ENCODE measurements at regions of chr2 and their contacts with region 1.

Region 1: GRCh38 chr2:149313512-149313972 is 16.8 kb upstream of the LYPD6 start:
- DNase-seq: peak; percentile 76
- H3K4me3 Mint-ChIP-seq: no peak overlapping the region
- H3K27ac Mint-ChIP-seq: no peak overlapping the region
- H3K4me1 Mint-ChIP-seq: peaks cover 9% of the 10 kb centered on the region
- H3K27me3 Mint-ChIP-seq: peaks cover under 1% of the 10 kb centered on the region
- CTCF ChIP-seq: peak; percentile 53

Region 2: DNA sequence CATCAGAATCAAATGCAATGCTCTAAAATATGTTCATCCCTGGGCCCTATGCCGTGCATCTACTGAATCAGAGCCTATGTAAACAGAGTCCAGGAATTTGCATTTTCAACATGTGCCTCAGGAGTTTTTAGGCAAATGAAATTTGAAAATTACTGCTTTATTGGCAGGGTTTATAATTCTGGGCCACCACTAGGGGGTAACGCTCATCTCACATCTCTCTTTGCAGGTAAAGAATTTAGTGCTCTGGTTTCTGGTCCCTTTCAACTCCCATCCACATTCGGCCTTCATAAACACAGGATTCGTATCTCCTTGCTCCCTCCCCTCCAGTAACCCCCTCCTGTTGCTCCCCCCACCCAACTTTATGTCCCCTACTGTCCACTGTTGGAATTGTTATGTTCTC is 225.8 kb before region 1 on chr2:
- CTCF ChIA-PET with region 1: no interaction called
- POLR2A ChIA-PET with region 1: no interaction called
- intact Hi-C with region 1: loop called (anchors 10 kb)
- DNase-seq: peak; percentile 16
- H3K4me3 Mint-ChIP-seq: no peak overlapping the region
- H3K27ac Mint-ChIP-seq: no peak overlapping the region
- H3K4me1 Mint-ChIP-seq: no peaks in the 10 kb centered on the region
- H3K27me3 Mint-ChIP-seq: no peaks in the 10 kb centered on the region
- CTCF ChIP-seq: peak; percentile 36

Region 3: DNA sequence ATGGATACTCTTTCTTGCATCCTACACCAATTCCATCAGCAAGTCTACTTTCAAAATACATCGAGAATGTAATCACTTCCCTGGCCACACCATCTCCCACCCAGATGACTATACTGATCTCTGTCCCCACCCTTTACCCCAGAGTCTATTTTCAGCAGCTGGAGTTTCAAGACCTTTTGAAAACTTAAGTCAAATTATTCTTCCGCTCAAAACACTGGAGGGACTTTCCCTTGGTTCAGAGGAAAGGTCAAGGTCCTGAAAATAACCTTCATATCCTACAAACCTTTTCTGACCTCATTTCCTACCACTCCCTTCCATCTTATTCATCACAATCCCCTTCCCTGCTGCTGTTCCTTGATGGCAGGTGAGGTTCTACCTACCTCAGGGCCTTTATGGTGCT is 42.0 kb before region 1 on chr2:
- CTCF ChIA-PET with region 1: no interaction called
- POLR2A ChIA-PET with region 1: no interaction called
- intact Hi-C with region 1: no loop called
- DNase-seq: no peak
- H3K4me3 Mint-ChIP-seq: no peak overlapping the region
- H3K27ac Mint-ChIP-seq: no peak overlapping the region
- H3K4me1 Mint-ChIP-seq: no peaks in the 10 kb centered on the region
- H3K27me3 Mint-ChIP-seq: no peaks in the 10 kb centered on the region
- CTCF ChIP-seq: no peak

Region 4: DNA sequence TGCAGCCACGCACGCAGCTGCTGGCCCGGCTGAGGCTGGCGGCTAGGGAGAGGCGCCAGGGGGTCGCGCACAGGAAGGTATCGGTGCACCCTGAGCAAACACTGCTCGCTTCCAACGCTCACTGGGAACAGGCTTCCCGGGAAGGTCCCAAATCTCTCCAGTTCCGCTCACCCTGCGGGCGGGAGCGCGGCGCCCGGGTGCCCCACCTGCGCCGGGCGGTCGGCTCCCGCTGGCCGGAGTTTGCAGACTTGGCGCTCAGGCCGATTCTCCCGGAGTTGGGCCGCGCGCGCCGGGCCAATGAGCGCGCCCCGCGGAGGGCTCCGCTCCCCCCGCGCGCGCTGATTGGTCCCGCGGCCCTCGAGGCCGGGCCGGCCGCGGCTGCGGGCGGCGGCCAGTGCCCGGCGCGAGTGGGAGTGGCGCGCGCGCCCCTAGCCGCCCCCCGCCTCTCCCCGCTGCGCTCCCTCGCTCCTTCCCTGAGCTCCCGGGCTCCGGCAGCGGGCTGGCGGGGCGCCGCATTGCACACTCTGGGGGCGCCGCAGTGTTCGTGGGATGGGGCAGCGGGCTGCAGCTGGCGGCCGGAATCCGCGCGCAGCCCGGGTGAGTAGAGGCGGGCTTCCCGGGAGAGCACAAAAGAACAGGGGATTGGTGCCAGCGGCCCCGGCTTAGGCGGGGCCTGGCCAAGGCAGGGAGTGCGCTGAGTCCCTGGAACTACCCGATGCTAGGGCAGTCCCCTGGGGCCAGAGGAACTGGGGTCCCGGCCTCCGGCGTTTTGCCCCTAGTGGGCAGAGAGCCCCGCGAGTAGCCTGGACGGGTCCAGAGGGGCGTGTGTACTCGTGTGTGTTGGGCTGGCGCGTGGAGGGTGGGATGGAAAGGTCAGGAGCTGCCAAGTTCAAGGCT is 16.8 kb after region 1 on chr2 and contains the start of gene LYPD6:
- CTCF ChIA-PET with region 1: interaction called, 19 read pairs
- POLR2A ChIA-PET with region 1: interaction called, 3 read pairs
- intact Hi-C with region 1: no loop called
- DNase-seq: peak; percentile 80
- H3K4me3 Mint-ChIP-seq: peak within 1 kb of the TSS; percentile 76
- H3K27ac Mint-ChIP-seq: peak within 1 kb of the TSS; percentile 49
- H3K4me1 Mint-ChIP-seq: peaks cover 8% of the 10 kb centered on the region
- H3K27me3 Mint-ChIP-seq: no peaks in the 10 kb centered on the region
- CTCF ChIP-seq: peak; percentile 11
- total RNA-seq, gene LYPD6: 2.0 and 3.2 TPM in 2 replicates

Region 5: GRCh38 chr2:149490296-149490695 is 176.8 kb after region 1 on chr2:
- CTCF ChIA-PET with region 1: no interaction called
- POLR2A ChIA-PET with region 1: no interaction called
- intact Hi-C with region 1: loop called (anchors 10 kb)
- DNase-seq: peak; percentile 12
- H3K4me3 Mint-ChIP-seq: no peak overlapping the region
- H3K27ac Mint-ChIP-seq: no peak overlapping the region
- H3K4me1 Mint-ChIP-seq: no peaks in the 10 kb centered on the region
- H3K27me3 Mint-ChIP-seq: peaks cover 24% of the 10 kb centered on the region
- CTCF ChIP-seq: no peak

Region 6: DNA sequence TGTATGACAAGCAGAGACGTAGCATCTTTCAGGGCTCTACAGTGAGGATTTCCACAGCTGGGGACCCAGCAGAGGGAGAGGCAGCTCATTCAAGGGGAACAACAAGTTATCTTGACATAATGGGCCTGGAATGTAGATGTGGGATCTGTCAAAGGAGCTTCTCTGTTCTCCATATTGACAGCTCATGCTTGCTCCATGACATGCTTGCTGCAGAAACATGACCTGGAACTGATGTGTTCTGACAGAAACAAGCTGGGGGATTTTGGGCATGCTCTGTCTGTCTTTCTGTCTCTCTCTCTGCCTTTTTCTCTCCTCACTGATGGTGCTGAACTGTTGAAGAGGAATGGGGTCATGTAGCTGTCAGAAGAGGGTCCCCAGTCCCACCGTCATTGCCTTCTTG is 194.4 kb after region 1 on chr2:
- CTCF ChIA-PET with region 1: no interaction called
- POLR2A ChIA-PET with region 1: no interaction called
- intact Hi-C with region 1: no loop called
- DNase-seq: no peak
- H3K4me3 Mint-ChIP-seq: no peak overlapping the region
- H3K27ac Mint-ChIP-seq: no peak overlapping the region
- H3K4me1 Mint-ChIP-seq: no peaks in the 10 kb centered on the region
- H3K27me3 Mint-ChIP-seq: no peaks in the 10 kb centered on the region
- CTCF ChIP-seq: no peak